Activated T-helper 1 cell treated with anti-CD3 and anti-CD28 coated beads, Interleukin-12 subunit alpha, Interleukin-12 subunit beta, Interleukin-2, Interleukin-4 antibody, amounts not matched to agents 30 ng/mL and 10 ng/mL and 1 ng/mL, durations not matched to agents 14 hours and 24 hours and 36 hours (primary cell): ENCODE measurements at regions of chr3 and their contacts with region 1.

Region 1: GRCh38 chr3:9249273-9250192 is at the start of gene SRGAP3:
- DNase-seq: peak; percentile 74
- H3K4me3 Mint-ChIP-seq: peak within 1 kb of the TSS; percentile 81
- H3K27ac Mint-ChIP-seq: no peak within 1 kb of the TSS
- H3K4me1 Mint-ChIP-seq: peaks cover 22% of the 10 kb centered on the region
- H3K27me3 Mint-ChIP-seq: peaks cover 23% of the 10 kb centered on the region
- total RNA-seq, gene SRGAP3: 0.54 and 0.61 TPM in 2 replicates

Region 2: GRCh38 chr3:9122732-9123364 is 126.7 kb before region 1 on chr3:
- intact Hi-C with region 1: no loop called
- DNase-seq: no peak
- H3K4me3 Mint-ChIP-seq: no peak overlapping the region
- H3K27ac Mint-ChIP-seq: no peak overlapping the region
- H3K4me1 Mint-ChIP-seq: no peaks in the 10 kb centered on the region
- H3K27me3 Mint-ChIP-seq: no peaks in the 10 kb centered on the region

Region 3: GRCh38 chr3:9224490-9224889 is 25.0 kb before region 1 on chr3:
- intact Hi-C with region 1: loop called (anchors 1 kb)
- DNase-seq: peak; percentile 2
- H3K4me3 Mint-ChIP-seq: no peak overlapping the region
- H3K27ac Mint-ChIP-seq: no peak overlapping the region
- H3K4me1 Mint-ChIP-seq: peaks cover 32% of the 10 kb centered on the region
- H3K27me3 Mint-ChIP-seq: peaks cover 14% of the 10 kb centered on the region

Region 4: DNA sequence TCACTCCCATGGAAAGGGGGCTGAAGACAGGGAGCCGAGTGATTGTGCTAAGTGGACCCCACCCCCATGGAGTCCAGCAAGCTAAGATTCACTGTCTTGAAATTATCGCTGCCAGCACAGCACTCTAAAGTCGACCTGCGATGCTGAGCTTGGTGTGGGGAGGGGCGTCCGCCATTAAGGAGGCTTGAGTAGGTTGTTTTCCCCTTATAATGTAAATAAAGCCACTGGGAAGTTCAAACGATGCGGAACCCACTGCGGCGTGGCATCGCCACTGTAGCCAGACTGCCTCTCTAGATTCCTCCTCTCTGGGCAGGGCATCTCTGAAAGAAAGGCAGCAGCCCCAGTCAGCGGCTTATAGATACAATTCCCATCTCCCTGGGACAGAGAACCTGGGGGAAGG is 10.8 kb after region 1 on chr3:
- intact Hi-C with region 1: no loop called
- DNase-seq: no peak
- H3K4me3 Mint-ChIP-seq: no peak overlapping the region
- H3K27ac Mint-ChIP-seq: no peak overlapping the region
- H3K4me1 Mint-ChIP-seq: no peaks in the 10 kb centered on the region
- H3K27me3 Mint-ChIP-seq: peaks cover 18% of the 10 kb centered on the region